CD14-positive monocyte (primary cell): ENCODE measurements at regions of chrX and their contacts with region 1.

Region 1: DNA sequence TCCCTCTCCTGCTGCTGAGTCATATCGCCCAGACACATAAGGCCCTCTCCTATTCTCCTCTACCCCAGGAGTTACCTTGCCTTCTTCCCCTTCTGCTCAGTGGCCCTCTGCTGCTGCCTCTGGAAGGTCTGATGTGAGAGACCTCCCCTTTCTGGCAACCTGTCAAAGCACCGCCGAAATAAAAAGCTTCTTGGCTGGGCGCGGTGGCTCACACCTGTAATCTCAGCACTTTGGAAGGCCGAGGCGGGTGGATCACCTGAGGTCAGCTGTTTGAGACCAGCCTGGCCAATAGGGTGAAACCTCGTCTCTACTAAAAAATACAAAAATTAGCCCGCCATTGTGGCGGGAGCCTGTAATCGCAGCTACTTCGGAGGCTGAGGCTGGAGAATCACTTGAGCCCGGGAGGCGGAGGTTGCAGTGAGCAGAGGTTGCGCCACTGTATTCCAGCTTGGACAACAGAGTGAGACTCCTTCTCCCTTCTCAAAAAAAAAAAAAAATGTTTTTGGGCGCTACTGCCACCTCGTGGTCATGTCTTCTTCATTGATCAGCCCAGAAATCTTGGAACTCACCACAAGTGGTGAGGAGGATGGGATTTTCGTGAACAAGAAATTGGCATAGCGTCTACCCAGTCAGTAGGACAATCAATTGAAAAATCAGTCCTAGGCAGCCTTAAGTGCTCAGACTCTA is 8.6 kb upstream of the ZXDA start:
- DNase-seq: peak in 2 of 3 donors; percentile 16 to 26
- H3K4me3 ChIP-seq: no peak overlapping the region
- H3K4me3 Mint-ChIP-seq: no peak overlapping the region
- H3K27ac ChIP-seq: no peak overlapping the region
- H3K27ac Mint-ChIP-seq: no peak overlapping the region
- H3K4me1 ChIP-seq: no peaks in the 10 kb centered on the region
- H3K4me1 Mint-ChIP-seq: peaks cover 5% of the 10 kb centered on the region
- H3K27me3 ChIP-seq: no peaks in the 10 kb centered on the region
- H3K27me3 Mint-ChIP-seq: peaks cover 0 to 3% (median 0%) of the 10 kb centered on the region in 3 donors
- CTCF ChIP-seq: peak; percentile 47

Region 2: GRCh38 chrX:57595381-57595811 is 323.5 kb before region 1 on chrX:
- intact Hi-C with region 1: loop called in 1 of 2 experiments (anchors 10 kb)
- DNase-seq: no peak
- H3K4me3 ChIP-seq: no peak overlapping the region
- H3K4me3 Mint-ChIP-seq: peak overlapping the region in 1 of 2 donors; percentile 39
- H3K27ac ChIP-seq: no peak overlapping the region
- H3K27ac Mint-ChIP-seq: no peak overlapping the region
- H3K4me1 ChIP-seq: peaks cover 21 to 23% of the 10 kb centered on the region in 2 donors
- H3K4me1 Mint-ChIP-seq: peaks cover 35% of the 10 kb centered on the region
- H3K27me3 ChIP-seq: no peaks in the 10 kb centered on the region
- H3K27me3 Mint-ChIP-seq: peaks cover 0 to 1% (median 0%) of the 10 kb centered on the region in 3 donors
- CTCF ChIP-seq: no peak